B cell (primary cell): ENCODE measurements at regions of chr6 and their contacts with region 1.

Region 1: DNA sequence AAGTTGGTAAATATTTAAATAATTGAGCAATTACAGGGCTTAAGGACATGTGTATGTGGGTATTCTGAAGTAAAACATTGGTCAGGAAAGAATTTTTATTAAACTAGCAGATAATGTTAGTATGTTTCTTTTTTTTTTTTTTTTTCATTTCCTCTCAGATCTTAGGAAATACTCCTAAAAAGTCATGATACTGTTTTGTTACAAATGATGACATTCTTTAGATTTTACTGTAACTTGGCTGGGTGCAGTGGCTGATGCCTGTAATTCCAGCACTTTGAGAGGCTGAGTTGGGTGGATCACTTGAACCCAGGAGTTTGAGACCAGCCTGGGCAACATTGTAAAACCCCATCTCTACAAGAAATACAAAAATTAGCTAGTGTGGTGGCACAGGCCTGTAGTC is 41.5 kb downstream of the CDC40 start:
- DNase-seq: no peak
- ATAC-seq: no peak
- H3K4me3 ChIP-seq: no peak overlapping the region
- H3K4me3 Mint-ChIP-seq: no peak overlapping the region
- H3K27ac ChIP-seq: no peak overlapping the region
- H3K27ac Mint-ChIP-seq: no peak overlapping the region
- H3K4me1 ChIP-seq: no peaks in the 10 kb centered on the region
- H3K4me1 Mint-ChIP-seq: no peaks in the 10 kb centered on the region
- H3K27me3 ChIP-seq: no peaks in the 10 kb centered on the region
- H3K27me3 Mint-ChIP-seq: no peaks in the 10 kb centered on the region
- CTCF ChIP-seq: no peak

Region 2: GRCh38 chr6:110207652-110208051 is 14.1 kb before region 1 on chr6:
- CTCF ChIA-PET with region 1: interaction called, 4 read pairs
- POLR2A ChIA-PET with region 1: no interaction called
- intact Hi-C with region 1: loop called (anchors 2 kb)
- DNase-seq: no peak
- ATAC-seq: no peak
- H3K4me3 ChIP-seq: no peak overlapping the region
- H3K4me3 Mint-ChIP-seq: no peak overlapping the region
- H3K27ac ChIP-seq: no peak overlapping the region
- H3K27ac Mint-ChIP-seq: no peak overlapping the region
- H3K4me1 ChIP-seq: peaks cover 25 to 29% of the 10 kb centered on the region in 2 donors
- H3K4me1 Mint-ChIP-seq: peaks cover 40% of the 10 kb centered on the region
- H3K27me3 ChIP-seq: no peaks in the 10 kb centered on the region
- H3K27me3 Mint-ChIP-seq: no peaks in the 10 kb centered on the region
- CTCF ChIP-seq: no peak

Region 3: GRCh38 chr6:110233770-110234374 is 12.1 kb after region 1 on chr6:
- CTCF ChIA-PET with region 1: no interaction called
- POLR2A ChIA-PET with region 1: no interaction called
- intact Hi-C with region 1: no loop called
- DNase-seq: peak; percentile 46
- ATAC-seq: peak; percentile 41
- H3K4me3 ChIP-seq: no peak overlapping the region
- H3K4me3 Mint-ChIP-seq: no peak overlapping the region
- H3K27ac ChIP-seq: peak overlapping the region; percentile 1 to 38
- H3K27ac Mint-ChIP-seq: peak overlapping the region; percentile 63
- H3K4me1 ChIP-seq: peaks cover 6 to 7% of the 10 kb centered on the region in 2 donors
- H3K4me1 Mint-ChIP-seq: peaks cover 12% of the 10 kb centered on the region
- H3K27me3 ChIP-seq: no peaks in the 10 kb centered on the region
- H3K27me3 Mint-ChIP-seq: no peaks in the 10 kb centered on the region
- CTCF ChIP-seq: no peak